PC-9 (cell line): ENCODE measurements at regions of chr1 and their contacts with region 1.

Region 1: DNA sequence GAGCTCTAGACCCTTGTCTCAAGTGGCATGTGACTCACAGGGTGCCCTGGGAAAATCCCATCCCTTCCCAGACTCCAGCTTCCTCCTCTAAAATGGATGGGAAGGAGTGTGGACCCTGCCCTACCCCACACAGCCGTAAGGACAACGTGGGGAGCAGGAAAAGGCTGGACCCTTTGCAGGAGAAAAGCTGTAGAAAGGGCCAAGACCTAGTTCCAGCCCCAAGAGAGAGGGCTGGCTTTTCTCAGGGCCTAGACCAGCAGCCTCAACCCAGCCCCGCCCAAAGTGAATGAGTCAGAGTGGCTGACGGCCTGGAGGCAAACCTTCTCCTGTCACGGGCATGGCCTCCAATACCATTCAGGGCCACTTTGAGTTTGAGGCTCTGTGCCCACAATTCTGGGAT is 1.1 kb downstream of the LAMB3 start:
- DNase-seq: peak; percentile 87 to 88
- H3K4me3 ChIP-seq: peak overlapping the region; percentile 76; the same call in 1 of the 2 replicates
- H3K27ac ChIP-seq: peak overlapping the region; percentile 98
- H3K4me1 ChIP-seq: peaks cover 93% of the 10 kb centered on the region
- H3K27me3 ChIP-seq: no peaks in the 10 kb centered on the region
- CTCF ChIP-seq: no peak

Region 2: GRCh38 chr1:209398313-209398991 is 252.7 kb before region 1 on chr1:
- CTCF ChIA-PET with region 1: no interaction called
- POLR2A ChIA-PET with region 1: interaction called, 5 read pairs
- intact Hi-C with region 1: loop called (anchors 10 kb)
- DNase-seq: peak; percentile 88 to 98
- H3K4me3 ChIP-seq: no peak overlapping the region; the same call in 1 of the 2 replicates
- H3K27ac ChIP-seq: peak overlapping the region; percentile 99
- H3K4me1 ChIP-seq: peaks cover 64% of the 10 kb centered on the region
- H3K27me3 ChIP-seq: no peaks in the 10 kb centered on the region
- CTCF ChIP-seq: no peak

Region 3: DNA sequence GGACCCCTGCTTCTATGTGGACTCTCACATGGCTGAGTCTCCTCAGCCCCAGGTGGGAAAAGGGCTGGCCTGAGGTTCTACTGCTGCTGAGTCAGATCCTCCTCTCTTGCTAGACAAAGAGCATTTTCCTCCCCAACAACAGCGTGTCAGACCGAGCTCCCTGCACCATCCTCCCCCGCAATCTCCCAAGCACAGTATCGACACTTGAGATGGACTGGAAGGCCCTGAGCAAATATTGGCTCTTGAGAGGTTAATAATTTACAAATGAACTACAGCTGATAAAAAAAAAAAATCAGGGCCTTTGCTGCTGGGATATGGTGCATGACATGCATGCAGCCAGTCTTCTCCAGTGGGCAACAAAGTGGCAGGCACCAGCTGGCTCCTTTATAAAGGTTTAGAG is 123.2 kb before region 1 on chr1:
- CTCF ChIA-PET with region 1: no interaction called
- POLR2A ChIA-PET with region 1: no interaction called
- intact Hi-C with region 1: no loop called
- DNase-seq: no peak
- H3K4me3 ChIP-seq: no peak overlapping the region
- H3K27ac ChIP-seq: no peak overlapping the region
- H3K4me1 ChIP-seq: no peaks in the 10 kb centered on the region
- H3K27me3 ChIP-seq: peaks cover 7% of the 10 kb centered on the region; the same call in 1 of the 2 replicates
- CTCF ChIP-seq: no peak

Region 4: DNA sequence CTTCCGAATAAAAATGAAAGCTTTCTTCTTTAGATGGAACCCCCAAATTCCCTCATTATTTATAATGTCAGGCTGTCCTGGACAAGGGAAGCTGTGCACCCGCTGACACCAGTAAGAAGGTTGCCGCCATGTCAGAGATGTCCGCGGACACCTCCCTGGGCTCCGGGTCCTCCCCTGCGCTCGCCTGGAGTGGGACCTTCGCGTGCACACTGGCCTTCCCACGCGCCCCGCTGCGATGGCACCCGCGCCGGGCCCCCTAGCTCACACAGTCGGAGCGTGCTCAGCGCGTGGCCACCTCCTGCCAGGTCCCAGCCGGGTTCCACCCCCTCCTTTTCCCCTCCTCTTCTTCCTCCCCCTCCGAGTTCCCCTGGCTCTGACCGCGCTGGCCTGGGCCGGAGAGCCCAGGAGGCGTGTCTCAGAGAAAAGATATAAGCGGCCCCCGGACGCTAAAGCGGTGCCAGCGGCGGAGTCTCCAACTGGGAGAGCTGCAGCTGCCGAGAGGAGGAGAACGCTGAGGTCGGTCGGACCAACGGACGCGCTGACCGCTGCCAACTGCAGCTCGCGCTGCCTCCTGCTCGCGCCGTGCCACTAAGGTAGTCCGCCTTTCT is 23.9 kb after region 1 on chr1 and contains the start of gene G0S2:
- CTCF ChIA-PET with region 1: no interaction called
- POLR2A ChIA-PET with region 1: interaction called, 6 read pairs
- intact Hi-C with region 1: loop called (anchors 1 kb)
- DNase-seq: peak; percentile 58 to 69
- H3K4me3 ChIP-seq: peak within 1 kb of the TSS; percentile 66
- H3K27ac ChIP-seq: peak within 1 kb of the TSS; percentile 81
- H3K4me1 ChIP-seq: peaks cover 52% of the 10 kb centered on the region
- H3K27me3 ChIP-seq: no peaks in the 10 kb centered on the region
- CTCF ChIP-seq: no peak
- total RNA-seq, gene G0S2: 2.4 and 4.9 TPM in 2 replicates

Region 5: GRCh38 chr1:209784265-209785169 is 133.4 kb after region 1 on chr1 and contains the start of gene C1orf74:
- CTCF ChIA-PET with region 1: no interaction called
- POLR2A ChIA-PET with region 1: interaction called, 6 read pairs
- intact Hi-C with region 1: loop called (anchors 2 kb)
- DNase-seq: peak; percentile 94 to 98
- H3K4me3 ChIP-seq: peak within 1 kb of the TSS; percentile 92
- H3K27ac ChIP-seq: peak within 1 kb of the TSS; percentile 85
- H3K4me1 ChIP-seq: peaks cover 22% of the 10 kb centered on the region
- H3K27me3 ChIP-seq: no peaks in the 10 kb centered on the region
- CTCF ChIP-seq: no peak
- total RNA-seq, gene C1orf74: 4.1 and 5.0 TPM in 2 replicates

Region 6: DNA sequence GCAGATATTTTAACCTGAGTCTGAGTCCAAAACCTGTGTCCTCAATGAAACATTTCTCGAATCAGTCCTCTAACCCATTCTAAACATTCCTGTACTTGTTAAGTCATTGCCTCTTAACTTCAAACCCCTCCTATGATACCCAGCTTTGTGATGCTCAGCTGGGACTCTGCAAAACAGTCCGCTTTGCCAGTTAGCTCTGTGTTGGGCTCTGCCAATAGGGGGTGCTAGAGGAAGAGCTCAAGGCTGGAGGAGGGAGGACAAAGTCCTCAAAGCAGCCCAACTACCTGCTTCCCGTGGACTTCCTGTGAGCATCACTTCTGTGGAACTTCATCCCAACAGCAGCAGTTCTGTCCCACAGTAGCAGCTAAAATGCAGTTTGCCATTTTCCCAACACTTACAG is 248.8 kb after region 1 on chr1:
- CTCF ChIA-PET with region 1: no interaction called
- POLR2A ChIA-PET with region 1: interaction called, 8 read pairs
- intact Hi-C with region 1: loop called (anchors 5 kb)
- DNase-seq: no peak
- H3K4me3 ChIP-seq: no peak overlapping the region
- H3K27ac ChIP-seq: peak overlapping the region; percentile 84
- H3K4me1 ChIP-seq: peaks cover 44% of the 10 kb centered on the region
- H3K27me3 ChIP-seq: no peaks in the 10 kb centered on the region
- CTCF ChIP-seq: peak; percentile 48; the same call in 1 of the 2 replicates